ENCODE measurements at regions of chr11 and their contacts with region 1.

Region 1: DNA sequence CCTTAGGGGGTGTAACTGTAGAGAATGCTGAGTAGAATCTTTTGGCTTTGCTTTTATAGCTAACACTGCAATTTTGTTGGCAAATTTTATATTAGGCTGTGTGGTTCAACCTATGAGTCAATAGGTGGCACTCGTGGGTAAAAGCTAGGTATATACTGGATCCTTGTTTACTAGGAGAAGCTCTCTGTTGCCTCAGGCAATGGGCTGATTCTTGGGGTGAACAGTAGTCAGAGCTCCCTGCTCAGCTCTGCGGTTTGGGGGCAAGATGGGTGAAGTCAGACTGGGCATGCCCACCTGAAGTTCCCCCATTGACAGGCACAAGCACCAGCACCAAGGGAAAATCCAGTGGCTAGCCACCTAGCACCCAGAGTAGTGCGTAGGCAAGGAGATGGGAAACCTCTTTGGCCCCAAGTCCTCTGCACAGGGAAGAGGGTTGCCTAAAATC is 238.7 kb downstream of the FAM181B start:
- DNase-seq: peak; percentile 28
- ATAC-seq: peak; percentile 99
- H3K4me3 Mint-ChIP-seq: no peak overlapping the region
- H3K27ac Mint-ChIP-seq: no peak overlapping the region
- H3K4me1 Mint-ChIP-seq: peaks cover 2% of the 10 kb centered on the region; the same call in 1 of the 2 replicates
- H3K27me3 Mint-ChIP-seq: no peaks in the 10 kb centered on the region
- CTCF ChIP-seq: peak; percentile 35; the same call in 1 of the 2 replicates

Region 2: GRCh38 chr11:82505384-82505783 is 10.4 kb after region 1 on chr11:
- CTCF ChIA-PET with region 1: interaction called, 11 read pairs
- POLR2A ChIA-PET with region 1: no interaction called
- DNase-seq: no peak
- ATAC-seq: peak; percentile 98
- H3K4me3 Mint-ChIP-seq: no peak overlapping the region
- H3K27ac Mint-ChIP-seq: no peak overlapping the region
- H3K4me1 Mint-ChIP-seq: peaks cover 11% of the 10 kb centered on the region
- H3K27me3 Mint-ChIP-seq: no peaks in the 10 kb centered on the region
- CTCF ChIP-seq: no peak

Region 3: DNA sequence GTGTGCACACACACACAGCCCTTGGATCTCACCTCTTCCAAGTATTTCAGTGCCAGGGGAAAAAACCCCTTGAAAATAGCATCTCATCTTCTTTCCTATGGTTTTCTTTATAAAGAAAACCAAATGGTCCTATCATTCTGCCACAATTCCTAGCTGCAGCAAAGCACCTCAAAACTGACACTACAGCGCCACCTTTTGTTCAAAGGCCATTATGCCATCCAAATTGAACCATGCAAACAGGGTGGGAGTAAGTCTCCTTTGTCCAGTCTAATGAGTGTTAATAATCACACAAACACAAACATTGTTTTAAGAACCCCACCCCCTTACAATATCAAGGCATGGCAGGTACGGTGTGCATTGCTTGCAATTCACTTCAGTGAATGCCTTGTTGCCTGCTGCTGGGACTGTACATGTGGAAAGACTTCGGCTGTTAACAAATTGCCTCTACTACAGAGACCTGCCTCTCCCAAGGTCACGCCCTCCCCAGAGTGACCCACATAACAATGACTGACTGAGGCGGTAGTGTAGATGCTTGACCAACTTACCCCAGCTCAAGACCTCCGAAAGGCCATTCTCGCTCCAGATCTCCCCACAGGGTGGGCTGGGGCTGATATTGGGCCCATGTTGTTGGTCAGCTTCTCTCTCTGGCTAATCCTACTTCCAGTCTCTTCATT is 207.0 kb after region 1 on chr11:
- CTCF ChIA-PET with region 1: interaction called, 61 read pairs
- POLR2A ChIA-PET with region 1: no interaction called
- DNase-seq: peak; percentile 63
- ATAC-seq: peak; percentile 95
- H3K4me3 Mint-ChIP-seq: no peak overlapping the region
- H3K27ac Mint-ChIP-seq: no peak overlapping the region
- H3K4me1 Mint-ChIP-seq: no peaks in the 10 kb centered on the region
- H3K27me3 Mint-ChIP-seq: peaks cover 3% of the 10 kb centered on the region; the same call in 1 of the 2 replicates
- CTCF ChIP-seq: peak; percentile 79

Measured in WTC11 (cell line).